IMR-90 (cell line): ENCODE measurements at regions of chr4 and their contacts with region 1.

Region 1: GRCh38 chr4:10808591-10808990 is 124.0 kb upstream of the CLNK start:
- DNase-seq: peak; percentile 68
- ATAC-seq: peak; percentile 32; the same call in 1 of the 2 replicates
- H3K4me3 ChIP-seq: no peak overlapping the region
- H3K27ac ChIP-seq: no peak overlapping the region
- H3K4me1 ChIP-seq: no peaks in the 10 kb centered on the region
- H3K27me3 ChIP-seq: no peaks in the 10 kb centered on the region; the same call in 1 of the 2 replicates
- CTCF ChIP-seq: no peak
- POLR2A ChIP-seq: no peak
- RAD21 ChIP-seq: no peak

Region 2: DNA sequence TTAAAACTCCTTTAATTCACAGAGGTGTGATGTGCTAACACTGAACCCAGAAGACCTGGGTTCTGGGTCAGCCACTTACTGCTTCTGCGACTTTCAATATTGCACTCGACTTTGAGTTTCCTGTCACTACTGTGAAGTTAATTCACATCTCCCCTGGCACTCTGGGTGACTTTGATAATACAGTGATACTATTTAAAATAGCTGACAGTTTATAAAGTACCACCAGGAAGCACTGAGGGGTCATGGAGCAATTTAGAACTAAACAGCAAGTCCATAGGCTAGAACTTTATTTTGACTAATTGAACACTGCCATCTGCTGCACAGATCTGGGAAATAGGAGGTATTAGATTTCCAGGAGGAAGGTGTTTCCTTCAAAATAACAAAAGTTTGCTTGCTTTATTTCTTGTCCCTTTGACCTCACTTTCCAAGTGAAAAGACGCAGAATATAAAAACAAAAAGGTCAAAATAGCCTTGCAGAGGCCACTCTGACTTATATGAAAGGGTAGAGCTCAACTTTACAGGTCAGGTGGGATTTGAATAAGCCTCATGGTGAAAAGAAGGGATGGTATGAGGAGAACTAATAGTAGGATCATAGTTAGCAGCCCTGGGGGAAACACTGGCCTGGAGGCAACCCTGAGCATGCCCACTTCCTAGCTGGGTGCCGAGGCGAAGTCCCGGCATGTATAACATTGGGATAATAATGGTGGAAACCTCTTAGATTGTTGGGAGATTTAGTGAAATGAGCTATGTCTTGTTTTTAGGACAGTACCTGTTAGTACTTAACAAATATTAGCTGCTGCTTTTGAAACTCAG is 404.8 kb before region 1 on chr4:
- CTCF ChIA-PET with region 1: no interaction called
- POLR2A ChIA-PET with region 1: no interaction called
- dilution Hi-C with region 1: no loop called
- in situ Hi-C with region 1: no loop called
- intact Hi-C with region 1: no loop called
- DNase-seq: peak; percentile 30
- ATAC-seq: peak; percentile 77
- H3K4me3 ChIP-seq: no peak overlapping the region
- H3K27ac ChIP-seq: no peak overlapping the region
- H3K4me1 ChIP-seq: no peaks in the 10 kb centered on the region
- H3K27me3 ChIP-seq: no peaks in the 10 kb centered on the region
- CTCF ChIP-seq: peak; percentile 55
- POLR2A ChIP-seq: no peak
- RAD21 ChIP-seq: peak; percentile 61

Region 3: DNA sequence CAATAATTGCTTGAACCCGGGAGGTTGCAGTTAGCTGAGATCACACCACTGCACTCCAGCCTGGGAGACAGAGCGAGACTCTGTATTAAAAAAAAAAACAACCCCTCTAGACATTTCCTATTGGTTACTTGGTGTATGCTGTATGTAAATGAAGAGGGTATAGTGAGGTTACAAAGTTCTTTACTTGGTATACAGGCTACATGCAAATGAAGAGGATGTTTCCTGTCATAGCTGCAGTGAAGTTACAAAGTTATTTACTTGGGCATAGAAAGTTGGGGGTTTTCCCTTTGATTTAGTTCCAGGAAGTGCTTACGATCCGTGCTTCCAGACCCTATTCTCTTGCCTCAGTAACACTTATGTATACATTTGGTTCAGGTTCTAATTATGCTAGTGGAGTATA is 85.6 kb before region 1 on chr4:
- CTCF ChIA-PET with region 1: no interaction called
- POLR2A ChIA-PET with region 1: no interaction called
- dilution Hi-C with region 1: no loop called
- in situ Hi-C with region 1: loop called (anchors 25 kb)
- intact Hi-C with region 1: no loop called
- DNase-seq: no peak
- ATAC-seq: no peak
- H3K4me3 ChIP-seq: no peak overlapping the region
- H3K27ac ChIP-seq: no peak overlapping the region
- H3K4me1 ChIP-seq: no peaks in the 10 kb centered on the region
- H3K27me3 ChIP-seq: no peaks in the 10 kb centered on the region; the same call in 1 of the 2 replicates
- CTCF ChIP-seq: no peak
- POLR2A ChIP-seq: no peak
- RAD21 ChIP-seq: no peak